ENCODE measurements at regions of chr17 and their contacts with region 1.

Region 1: GRCh38 chr17:75024686-75025397 is 12.4 kb downstream of the MRPL58 start:
- DNase-seq: peak; percentile 51
- ATAC-seq: peak; percentile 95
- H3K4me3 ChIP-seq: no peak overlapping the region
- H3K27ac ChIP-seq: peak overlapping the region; percentile 49
- H3K4me1 ChIP-seq: peaks cover 14% of the 10 kb centered on the region
- H3K27me3 ChIP-seq: no peaks in the 10 kb centered on the region
- CTCF ChIP-seq: no peak

Region 2: GRCh38 chr17:75012346-75013091 is 12.3 kb before region 1 on chr17 and contains the start of gene MRPL58:
- CTCF ChIA-PET with region 1: interaction called, 10 read pairs
- POLR2A ChIA-PET with region 1: interaction called, 4 read pairs
- intact Hi-C with region 1: loop called (anchors 1 kb)
- DNase-seq: peak; percentile 91
- ATAC-seq: peak; percentile 83
- H3K4me3 ChIP-seq: peak within 1 kb of the TSS; percentile 87
- H3K27ac ChIP-seq: peak within 1 kb of the TSS; percentile 68
- H3K4me1 ChIP-seq: peaks cover 30% of the 10 kb centered on the region
- H3K27me3 ChIP-seq: no peaks in the 10 kb centered on the region
- CTCF ChIP-seq: peak; percentile 38; the same call in 1 of the 2 replicates
- total RNA-seq, gene MRPL58: 151 and 195 TPM in 2 replicates

Measured in PC-3 (cell line).